Activated CD4-positive, alpha-beta T cell treated with anti-CD3 and anti-CD28 coated beads, Interleukin-2, amount 10 ng/mL, durations not matched to agents 24 days and 14 days (primary cell): ENCODE measurements at regions of chr2 and their contacts with region 1.

Region 1: DNA sequence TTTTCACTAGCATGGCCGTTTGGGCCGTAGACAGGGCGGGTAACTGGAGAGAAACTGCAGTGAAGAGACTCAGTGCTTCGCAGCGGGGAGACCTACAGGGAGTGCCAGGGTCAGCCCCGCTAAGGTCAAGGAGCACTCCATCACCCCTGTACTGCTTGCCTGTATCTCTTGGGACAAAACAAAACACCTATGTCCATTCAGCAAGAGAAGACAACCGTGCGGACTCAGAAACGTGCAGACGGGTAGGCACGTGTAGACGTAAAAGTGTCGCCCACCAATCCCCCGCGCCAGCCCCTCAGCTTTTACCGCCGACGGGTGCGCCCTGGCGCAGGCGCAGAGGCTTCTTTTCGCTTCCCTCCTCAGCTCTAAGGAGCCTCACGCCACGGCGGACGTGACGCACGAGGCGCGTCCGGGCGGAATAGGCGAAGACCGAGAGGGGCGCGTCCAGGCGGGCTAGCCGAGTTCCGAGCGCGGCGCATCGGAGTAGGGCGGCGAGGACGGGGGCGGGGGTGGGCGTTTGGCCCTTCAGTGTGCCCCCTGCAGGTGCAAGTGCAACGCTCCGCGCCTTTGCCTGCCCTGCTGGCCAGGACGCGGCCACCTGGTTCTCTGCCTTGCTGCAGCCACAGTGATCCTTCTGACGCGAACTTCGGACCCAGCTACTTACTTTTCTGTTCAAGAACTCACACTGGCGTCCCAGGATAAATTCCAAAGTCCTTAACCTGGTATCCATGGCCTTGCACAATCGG is 3.3 kb upstream of the SOS1 start:
- DNase-seq: peak; percentile 99
- H3K4me3 Mint-ChIP-seq: peak overlapping the region; percentile 87
- H3K27ac Mint-ChIP-seq: peak overlapping the region; percentile 92
- H3K4me1 Mint-ChIP-seq: peaks cover 44% of the 10 kb centered on the region
- H3K27me3 Mint-ChIP-seq: no peaks in the 10 kb centered on the region

Region 2: DNA sequence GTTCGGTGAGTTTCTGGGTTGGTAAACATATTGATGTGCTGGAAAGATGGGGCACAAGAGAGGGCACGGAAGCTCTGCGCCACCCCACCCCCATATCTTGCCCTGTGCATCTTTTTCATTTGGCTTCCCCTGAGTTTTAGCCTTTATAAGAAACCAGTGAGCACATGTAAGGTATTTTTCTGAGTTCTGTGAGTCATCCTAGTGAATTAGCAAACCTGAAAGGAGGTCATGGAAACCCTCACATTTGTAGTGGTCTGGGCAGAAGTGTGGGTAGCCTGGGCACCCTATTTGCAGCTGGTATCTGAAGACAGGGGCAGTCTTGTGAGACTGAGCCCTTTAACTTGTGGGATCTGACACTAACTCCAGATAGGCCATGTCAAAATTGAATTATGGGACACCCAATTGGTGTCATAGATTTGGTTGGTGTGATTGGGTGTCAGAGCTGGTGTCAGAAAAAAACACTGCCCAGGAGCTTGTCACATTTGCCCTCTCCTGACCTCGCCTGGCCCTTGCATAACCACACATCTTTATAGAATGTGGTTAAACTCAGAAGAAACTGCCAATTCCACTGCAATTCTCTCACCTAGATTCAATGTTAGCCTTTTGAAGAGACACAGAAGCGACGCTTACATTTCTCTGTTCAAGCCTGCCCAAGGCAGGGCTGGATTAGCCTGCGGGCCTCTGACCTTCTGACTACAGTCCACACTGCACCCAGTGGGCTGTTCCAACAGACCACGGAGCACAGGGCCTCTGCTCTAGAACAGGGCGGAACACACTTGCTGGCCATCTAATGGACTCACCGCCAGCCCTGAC is 470.3 kb before region 1 on chr2:
- intact Hi-C with region 1: loop called (anchors 2 kb)
- DNase-seq: peak; percentile 82
- H3K4me3 Mint-ChIP-seq: peak overlapping the region; percentile 63
- H3K27ac Mint-ChIP-seq: peak overlapping the region; percentile 87
- H3K4me1 Mint-ChIP-seq: peaks cover 58% of the 10 kb centered on the region
- H3K27me3 Mint-ChIP-seq: no peaks in the 10 kb centered on the region

Region 3: GRCh38 chr2:38750891-38751595 is 373.1 kb before region 1 on chr2 and contains the start of gene SRSF7:
- intact Hi-C with region 1: loop called (anchors 5 kb)
- DNase-seq: peak; percentile 99
- H3K4me3 Mint-ChIP-seq: peak within 1 kb of the TSS; percentile 91
- H3K27ac Mint-ChIP-seq: peak within 1 kb of the TSS; percentile 98
- H3K4me1 Mint-ChIP-seq: peaks cover 47% of the 10 kb centered on the region
- H3K27me3 Mint-ChIP-seq: peaks cover 2% of the 10 kb centered on the region
- total RNA-seq, gene SRSF7: 415 and 419 TPM in 2 replicates

Region 4: DNA sequence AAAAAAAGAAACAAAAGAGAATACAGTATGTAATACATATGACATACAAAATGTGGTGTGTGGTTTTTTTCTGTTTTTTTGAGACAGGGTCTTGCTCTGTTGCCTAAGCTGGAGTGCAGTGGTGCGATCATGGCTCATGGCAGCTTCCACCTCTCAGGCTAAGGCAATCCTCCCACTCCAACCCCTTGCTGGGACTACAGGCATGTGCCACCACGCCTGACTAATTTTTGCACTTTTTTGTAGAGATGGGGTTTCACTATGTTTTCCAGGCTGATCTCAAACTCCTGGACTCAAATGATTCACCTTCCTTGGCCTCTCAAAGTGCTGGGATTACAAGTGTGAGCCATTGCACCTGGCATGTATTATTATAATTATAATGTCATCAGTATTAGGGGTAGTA is 287.4 kb before region 1 on chr2:
- intact Hi-C with region 1: no loop called
- DNase-seq: no peak
- H3K4me3 Mint-ChIP-seq: no peak overlapping the region
- H3K27ac Mint-ChIP-seq: no peak overlapping the region
- H3K4me1 Mint-ChIP-seq: no peaks in the 10 kb centered on the region
- H3K27me3 Mint-ChIP-seq: no peaks in the 10 kb centered on the region

Region 5: GRCh38 chr2:38863378-38863695 is 260.8 kb before region 1 on chr2:
- intact Hi-C with region 1: no loop called
- DNase-seq: peak; percentile 61
- H3K4me3 Mint-ChIP-seq: no peak overlapping the region
- H3K27ac Mint-ChIP-seq: no peak overlapping the region
- H3K4me1 Mint-ChIP-seq: peaks cover 10% of the 10 kb centered on the region
- H3K27me3 Mint-ChIP-seq: no peaks in the 10 kb centered on the region

Region 6: DNA sequence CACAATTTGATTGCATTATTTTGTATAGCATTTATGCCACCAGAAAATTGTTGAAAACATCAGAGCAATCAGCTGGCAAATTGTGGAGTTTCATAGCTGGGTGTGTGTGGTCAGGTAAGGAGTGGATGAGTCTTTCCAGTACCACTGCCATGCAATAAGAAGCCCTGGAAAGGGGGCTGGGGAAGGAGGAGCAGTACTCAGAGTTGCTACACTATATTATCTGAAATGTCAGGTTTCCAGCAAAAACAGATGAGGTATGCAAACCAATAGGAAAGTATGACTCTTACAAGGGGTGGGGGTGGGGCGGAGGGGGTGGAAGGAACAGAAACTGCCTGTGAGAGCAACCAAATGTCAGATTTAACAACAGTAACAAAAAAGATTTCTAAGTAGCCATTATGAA is 115.5 kb before region 1 on chr2:
- intact Hi-C with region 1: loop called (anchors 5 kb)
- DNase-seq: no peak
- H3K4me3 Mint-ChIP-seq: peak overlapping the region; percentile 57
- H3K27ac Mint-ChIP-seq: peak overlapping the region; percentile 94
- H3K4me1 Mint-ChIP-seq: peaks cover 20% of the 10 kb centered on the region
- H3K27me3 Mint-ChIP-seq: no peaks in the 10 kb centered on the region

Region 7: GRCh38 chr2:39140322-39140847 is 16.2 kb after region 1 on chr2:
- intact Hi-C with region 1: loop called (anchors 1 kb)
- DNase-seq: no peak
- H3K4me3 Mint-ChIP-seq: no peak overlapping the region
- H3K27ac Mint-ChIP-seq: peak overlapping the region; percentile 56
- H3K4me1 Mint-ChIP-seq: peaks cover 57% of the 10 kb centered on the region
- H3K27me3 Mint-ChIP-seq: no peaks in the 10 kb centered on the region

Region 8: DNA sequence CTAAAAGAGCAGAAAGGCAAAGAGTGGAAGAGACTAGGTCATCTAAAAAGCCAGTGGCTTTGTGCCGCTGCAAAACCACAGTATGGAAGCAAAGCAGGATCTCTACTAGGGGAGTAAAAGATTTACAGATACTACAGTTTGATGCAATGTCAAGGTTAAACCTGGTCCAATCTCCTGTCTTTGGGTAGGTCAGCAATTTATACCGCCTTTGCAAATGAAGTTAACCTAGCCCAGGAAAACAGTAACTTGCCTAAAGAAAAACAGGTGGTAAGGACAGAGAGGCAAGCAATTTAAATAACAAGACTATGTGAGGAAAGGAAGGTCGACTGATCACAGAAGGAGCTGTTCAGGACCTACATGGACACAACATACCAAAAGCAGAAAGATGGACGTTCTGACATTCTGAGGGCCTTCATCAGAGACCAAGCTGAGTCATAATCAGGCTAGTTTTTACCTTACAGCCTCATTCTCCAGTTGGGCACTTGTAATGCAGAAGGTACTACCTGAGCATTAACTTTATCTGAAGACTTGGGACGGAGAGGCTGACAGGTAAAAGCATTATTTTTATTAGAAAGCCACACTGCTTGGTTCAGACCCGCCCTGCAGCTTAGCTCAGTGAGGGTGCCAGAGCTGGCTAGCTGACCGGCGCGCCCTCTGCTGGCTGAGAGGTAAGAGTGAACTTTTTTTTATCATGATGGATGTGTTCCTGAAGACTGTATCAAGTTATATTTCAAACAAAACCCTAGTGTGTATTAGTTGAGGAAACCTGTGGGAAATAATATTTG is 103.6 kb after region 1 on chr2:
- intact Hi-C with region 1: loop called (anchors 1 kb)
- DNase-seq: peak; percentile 94
- H3K4me3 Mint-ChIP-seq: peak overlapping the region; percentile 65
- H3K27ac Mint-ChIP-seq: peak overlapping the region; percentile 87
- H3K4me1 Mint-ChIP-seq: peaks cover 39% of the 10 kb centered on the region
- H3K27me3 Mint-ChIP-seq: no peaks in the 10 kb centered on the region

Region 9: DNA sequence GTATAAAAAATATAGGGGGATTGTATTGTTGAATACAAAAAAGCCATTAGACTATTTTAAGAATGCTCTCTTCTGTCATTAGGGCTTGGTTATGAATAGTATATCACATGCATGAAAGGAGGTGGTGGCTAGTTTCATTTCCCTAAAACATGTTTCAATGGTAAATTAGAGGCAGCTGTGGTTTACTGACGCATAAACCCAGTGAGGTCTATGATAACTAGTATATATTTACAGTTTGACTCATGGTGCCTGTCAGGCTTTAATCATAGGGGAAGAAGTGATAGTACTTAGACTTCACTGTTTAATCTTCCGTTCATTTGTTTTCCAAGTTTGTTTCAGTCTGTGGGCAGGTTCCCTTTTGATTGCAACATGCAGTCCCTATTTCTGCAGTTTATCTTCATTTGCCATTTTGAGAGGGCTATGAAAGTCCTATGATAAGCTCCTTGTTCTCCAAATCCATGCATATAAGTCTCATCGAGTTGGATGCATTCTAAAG is 368.0 kb after region 1 on chr2:
- intact Hi-C with region 1: loop called (anchors 1 kb)
- DNase-seq: peak; percentile 80
- H3K4me3 Mint-ChIP-seq: peak overlapping the region; percentile 51
- H3K27ac Mint-ChIP-seq: peak overlapping the region; percentile 73
- H3K4me1 Mint-ChIP-seq: peaks cover 43% of the 10 kb centered on the region
- H3K27me3 Mint-ChIP-seq: peaks cover 13% of the 10 kb centered on the region